ENCODE measurements at regions of chr10 and their contacts with region 1.

Region 1: GRCh38 chr10:22666287-22667092 is 47.9 kb downstream of the PIP4K2A start:
- DNase-seq: peak; percentile 90
- H3K4me3 Mint-ChIP-seq: peak overlapping the region; percentile 90
- H3K27ac Mint-ChIP-seq: peak overlapping the region; percentile 94
- H3K4me1 Mint-ChIP-seq: peaks cover 52% of the 10 kb centered on the region
- H3K27me3 Mint-ChIP-seq: no peaks in the 10 kb centered on the region

Region 2: GRCh38 chr10:22550732-22551131 is 115.8 kb before region 1 on chr10:
- intact Hi-C with region 1: no loop called
- DNase-seq: peak; percentile 85
- H3K4me3 Mint-ChIP-seq: no peak overlapping the region
- H3K27ac Mint-ChIP-seq: no peak overlapping the region
- H3K4me1 Mint-ChIP-seq: peaks cover 11% of the 10 kb centered on the region
- H3K27me3 Mint-ChIP-seq: no peaks in the 10 kb centered on the region

Region 3: DNA sequence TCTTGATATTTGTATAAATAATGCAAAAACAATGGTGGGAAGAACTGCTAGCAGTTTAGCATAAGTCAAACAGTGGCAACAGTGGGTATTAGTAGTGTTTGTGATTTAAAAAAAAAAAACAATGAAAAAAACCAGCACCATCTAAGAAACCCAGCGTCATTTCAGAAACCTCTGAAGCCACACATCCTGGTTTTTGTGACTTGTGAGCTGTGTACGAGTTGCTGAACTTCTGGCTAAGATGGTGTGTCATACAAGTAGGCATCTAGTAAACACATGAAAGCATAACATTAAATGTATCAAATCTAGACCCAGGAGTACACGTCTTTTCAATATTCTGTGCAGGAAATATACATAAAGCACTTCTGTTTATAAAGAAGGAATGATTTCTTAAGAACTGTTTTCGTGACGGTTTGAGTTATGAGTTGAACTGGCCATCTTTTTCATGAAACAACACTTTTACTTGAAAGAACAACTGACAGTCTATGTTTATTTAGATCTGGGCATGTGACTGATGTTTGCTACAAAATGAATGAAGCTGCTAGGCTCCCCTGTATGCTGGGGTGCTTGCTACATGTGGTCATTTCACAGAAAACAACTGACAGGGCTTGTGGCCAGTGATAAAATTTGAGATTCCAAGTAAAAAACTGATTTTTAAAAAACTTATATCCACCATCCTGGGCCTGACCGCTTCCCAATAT is 95.6 kb before region 1 on chr10:
- intact Hi-C with region 1: no loop called
- DNase-seq: peak; percentile 82
- H3K4me3 Mint-ChIP-seq: peak overlapping the region; percentile 30
- H3K27ac Mint-ChIP-seq: peak overlapping the region; percentile 91
- H3K4me1 Mint-ChIP-seq: peaks cover 40% of the 10 kb centered on the region
- H3K27me3 Mint-ChIP-seq: no peaks in the 10 kb centered on the region

Region 4: DNA sequence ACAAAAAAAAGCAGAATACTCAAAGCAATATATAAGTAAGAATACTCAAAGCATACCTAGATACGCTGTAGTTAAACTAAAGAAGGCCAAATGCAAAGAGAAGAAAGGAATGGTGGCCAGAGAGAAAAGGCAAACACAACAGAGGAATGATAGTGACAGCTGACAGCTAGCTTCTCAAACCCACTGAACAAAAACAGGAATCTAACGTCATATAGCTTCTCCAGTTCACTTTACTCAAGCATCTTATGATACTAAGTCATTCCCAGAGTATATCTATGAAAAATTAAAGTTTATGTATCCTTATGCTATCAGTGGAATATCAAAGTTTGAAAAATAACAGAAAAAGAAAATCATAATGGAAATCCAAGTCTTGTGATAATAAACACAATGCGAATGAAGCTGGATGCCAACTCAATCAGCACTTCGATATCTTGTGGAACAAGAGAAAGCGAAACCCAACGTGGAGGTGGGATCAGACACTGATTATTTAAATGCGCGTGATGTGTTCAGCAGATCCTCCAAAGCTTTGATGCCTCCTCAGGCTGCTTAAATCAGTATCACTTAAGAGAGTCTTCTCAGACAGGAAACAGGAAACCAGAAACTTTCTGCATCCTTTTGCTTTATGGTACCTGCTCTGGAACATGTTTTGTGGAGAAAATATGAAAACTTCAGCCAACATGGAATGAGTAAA is 54.9 kb before region 1 on chr10:
- intact Hi-C with region 1: loop called (anchors 5 kb)
- DNase-seq: peak; percentile 92
- H3K4me3 Mint-ChIP-seq: peak overlapping the region; percentile 63
- H3K27ac Mint-ChIP-seq: peak overlapping the region; percentile 64
- H3K4me1 Mint-ChIP-seq: peaks cover 66% of the 10 kb centered on the region
- H3K27me3 Mint-ChIP-seq: no peaks in the 10 kb centered on the region

Region 5: DNA sequence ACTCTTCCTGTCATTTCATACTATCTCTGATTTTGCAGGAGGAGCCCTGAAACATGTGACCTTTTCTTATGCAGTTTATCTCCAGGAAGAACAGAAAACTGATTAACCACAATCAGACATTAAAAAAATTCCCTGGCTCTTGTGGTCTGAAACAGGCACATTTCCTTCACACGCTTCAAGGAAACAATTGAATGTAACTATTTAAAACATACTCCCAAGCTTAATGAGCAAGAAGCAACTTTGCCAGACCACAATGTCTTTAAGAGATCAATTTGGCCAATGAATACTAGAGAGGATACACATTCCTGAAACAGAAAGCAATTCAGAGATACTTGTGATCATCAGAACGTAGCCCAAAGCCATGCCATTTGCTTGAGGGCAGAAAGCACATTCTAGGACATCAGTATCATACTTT is 17.9 kb before region 1 on chr10:
- intact Hi-C with region 1: loop called (anchors 1 kb)
- DNase-seq: peak; percentile 63
- H3K4me3 Mint-ChIP-seq: peak overlapping the region; percentile 90
- H3K27ac Mint-ChIP-seq: peak overlapping the region; percentile 100
- H3K4me1 Mint-ChIP-seq: peaks cover 87% of the 10 kb centered on the region
- H3K27me3 Mint-ChIP-seq: no peaks in the 10 kb centered on the region